ENCODE measurements at regions of chr4 and their contacts with region 1.

Region 1: GRCh38 chr4:60992037-60992436 is 208.1 kb upstream of the ADGRL3 start:
- DNase-seq: no peak
- H3K4me3 ChIP-seq: no peak overlapping the region
- CTCF ChIP-seq: no peak
- POLR2A ChIP-seq: no peak

Region 2: GRCh38 chr4:61853041-61853440 is 861.0 kb after region 1 on chr4:
- intact Hi-C with region 1: loop called (anchors 10 kb)
- DNase-seq: no peak
- H3K4me3 ChIP-seq: no peak overlapping the region
- CTCF ChIP-seq: no peak
- POLR2A ChIP-seq: no peak